Dorsolateral prefrontal cortex (tissue), 120 donors: ENCODE measurements at regions of chr10 and their contacts with region 1.

Region 1: DNA sequence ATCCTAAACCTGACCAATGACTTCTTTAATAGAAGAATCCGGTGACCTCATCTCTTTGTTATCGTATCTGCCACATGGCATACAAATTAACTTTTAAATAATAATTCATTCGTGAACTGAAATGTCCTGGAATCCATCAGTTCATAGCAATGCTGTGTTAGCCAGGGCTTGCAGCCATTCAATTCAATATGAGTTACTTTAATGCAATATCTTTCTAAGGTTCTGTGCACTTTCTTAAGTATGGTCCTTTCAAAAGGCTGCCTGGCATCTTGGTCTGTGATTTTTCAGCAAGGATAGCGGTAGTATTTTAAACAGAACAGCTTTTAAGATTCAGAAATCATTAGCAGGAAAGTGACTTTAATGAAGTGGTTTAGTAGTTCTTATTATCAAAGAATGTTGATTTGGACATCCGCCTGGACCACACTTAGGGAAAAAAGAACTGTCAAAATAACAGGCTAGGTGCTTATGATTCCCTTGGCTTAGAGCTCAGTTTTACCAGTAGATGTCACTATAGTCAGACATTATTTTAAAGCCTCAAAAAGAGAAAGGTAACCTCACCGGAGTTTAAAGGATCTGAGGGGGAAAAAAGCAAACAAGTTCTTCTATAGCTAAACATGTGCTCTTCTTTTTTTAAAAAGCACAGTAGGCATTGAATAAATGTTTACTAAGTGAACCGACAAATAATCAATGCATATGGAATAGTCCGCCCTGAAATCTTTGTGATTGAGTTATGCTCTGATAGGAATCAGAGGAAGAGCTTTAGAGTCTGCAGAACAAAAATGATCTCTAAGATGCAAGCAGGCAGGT is 22.7 kb downstream of the SLC35G1 start:
- DNase-seq: no peak
- H3K4me3 ChIP-seq: peak overlapping the region in 12 of 59 donors; percentile 7 to 41 (median 30)
- H3K27ac ChIP-seq: no peak overlapping the region
- H3K27me3 ChIP-seq: no peaks in the 10 kb centered on the region
- CTCF ChIP-seq: peak; percentile 27 to 78 (median 58)

Region 2: GRCh38 chr10:93784059-93784458 is 132.4 kb before region 1 on chr10:
- intact Hi-C with region 1: no loop called
- DNase-seq: no peak
- H3K4me3 ChIP-seq: no peak overlapping the region
- H3K27ac ChIP-seq: no peak overlapping the region
- H3K27me3 ChIP-seq: no peaks in the 10 kb centered on the region
- CTCF ChIP-seq: no peak

Region 3: GRCh38 chr10:94315024-94315451 is 398.6 kb after region 1 on chr10:
- intact Hi-C with region 1: loop called (anchors 5 kb)
- DNase-seq: no peak
- H3K4me3 ChIP-seq: no peak overlapping the region
- H3K27ac ChIP-seq: peak overlapping the region in 2 of 59 donors; percentile 22 to 57
- H3K27me3 ChIP-seq: no peaks in the 10 kb centered on the region
- CTCF ChIP-seq: no peak